Psoas muscle (tissue), 8 donors: ENCODE measurements at regions of chr1 and their contacts with region 1.

Region 1: GRCh38 chr1:20896871-20897223 is 109.7 kb upstream of the HP1BP3 start:
- DNase-seq: no peak
- ATAC-seq: peak in 1 of 4 donors; percentile 38
- H3K4me3 ChIP-seq: no peak overlapping the region
- H3K27ac ChIP-seq: no peak overlapping the region
- H3K4me1 ChIP-seq: peaks cover 21% of the 10 kb centered on the region
- H3K27me3 ChIP-seq: no peaks in the 10 kb centered on the region
- CTCF ChIP-seq: no peak

Region 2: DNA sequence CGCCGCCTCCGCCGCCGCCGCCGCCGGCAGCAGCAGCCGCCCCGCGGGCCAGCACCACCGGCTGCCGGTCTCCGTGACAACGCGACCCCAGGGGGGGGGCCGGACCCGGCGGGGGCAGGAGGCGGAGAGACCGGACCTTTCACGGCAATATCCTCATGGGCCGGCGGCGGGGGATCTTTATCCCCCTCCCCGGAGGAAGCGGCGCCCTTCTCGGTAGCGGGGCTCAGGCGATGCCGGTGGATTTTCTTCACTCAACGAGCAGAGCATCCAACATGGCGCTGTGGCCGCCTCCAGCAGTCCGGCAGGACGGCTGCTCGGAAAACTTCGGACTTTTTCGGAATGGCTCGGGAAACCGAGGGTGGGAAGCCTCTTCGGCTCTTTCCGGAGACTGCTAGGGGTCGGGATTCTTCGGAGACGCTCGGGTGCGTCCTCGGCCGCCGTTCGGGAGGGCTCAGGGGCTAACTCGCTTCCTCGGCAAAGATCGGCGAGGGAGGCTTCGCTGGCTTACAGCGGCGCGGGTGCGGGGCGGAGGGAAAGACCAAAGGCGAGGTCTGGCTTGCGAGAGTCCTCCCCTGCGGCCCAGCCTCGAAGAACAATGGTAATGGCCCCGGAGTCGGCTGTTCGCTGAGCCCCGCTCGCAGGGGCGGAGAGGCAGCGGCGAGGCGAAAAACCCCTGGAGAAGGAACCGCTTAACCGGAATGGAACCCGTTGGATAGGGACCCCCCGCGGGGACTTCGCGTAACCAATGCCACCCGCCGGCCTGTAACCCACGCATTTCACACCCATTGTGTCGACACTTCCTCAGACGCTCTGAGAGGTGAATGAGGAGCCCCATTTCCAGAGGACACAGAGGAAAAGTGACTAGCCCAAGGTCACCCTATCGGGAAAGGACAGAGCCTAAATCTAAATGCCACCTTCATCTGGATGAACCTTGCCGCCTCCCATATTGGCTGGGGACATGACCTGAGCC is 280.0 kb after region 1 on chr1 and contains the start of gene EIF4G3:
- intact Hi-C with region 1: loop called in 1 of 2 experiments (anchors 5 kb)
- DNase-seq: peak; percentile 98 to 99
- ATAC-seq: peak; percentile 96 to 98 (median 98)
- H3K4me3 ChIP-seq: peak within 1 kb of the TSS; percentile 98
- H3K27ac ChIP-seq: peak within 1 kb of the TSS; percentile 85
- H3K4me1 ChIP-seq: peaks cover 22% of the 10 kb centered on the region
- H3K27me3 ChIP-seq: no peaks in the 10 kb centered on the region
- CTCF ChIP-seq: no peak
- total RNA-seq, gene EIF4G3: 38.7 to 58.1 (median 48.2) TPM